MCF 10A (cell line): ENCODE measurements at regions of chr5 and their contacts with region 1.

Region 1: DNA sequence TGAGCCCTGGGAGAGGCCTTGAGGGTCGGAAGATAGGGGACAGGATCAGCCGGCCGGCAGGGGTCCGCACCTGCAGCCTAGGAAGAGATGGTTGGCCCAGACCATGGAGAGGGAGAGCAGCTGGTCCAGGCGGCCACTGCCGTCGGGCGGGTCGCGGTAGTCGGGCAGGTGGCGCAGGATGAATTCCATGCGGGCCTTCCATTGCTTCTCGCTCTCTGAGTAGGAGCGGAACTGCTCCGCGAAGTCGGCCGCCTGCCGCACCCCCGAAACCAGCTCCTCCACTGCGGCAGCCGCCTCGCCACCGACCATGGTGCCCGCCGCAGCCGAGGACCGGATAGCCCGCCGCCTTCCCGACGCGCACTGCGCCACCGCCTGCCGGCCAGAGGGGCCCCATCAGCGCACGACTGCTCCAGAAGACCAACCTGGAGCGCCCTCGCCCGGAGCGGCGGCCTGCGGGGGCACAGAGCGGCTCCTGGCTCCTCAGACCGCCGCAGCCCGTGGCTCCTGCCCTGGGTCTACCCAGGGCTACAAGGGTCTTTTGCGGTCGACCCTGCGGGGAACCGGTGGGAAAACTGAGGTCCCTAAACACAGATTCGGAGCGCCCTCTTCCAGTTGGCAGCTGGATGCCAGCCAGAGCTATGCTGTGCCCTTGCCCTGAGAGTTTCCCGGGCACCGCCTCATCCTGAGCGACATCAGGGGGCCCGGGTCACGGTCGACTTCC is at the start of gene CDKN2AIPNL:
- DNase-seq: peak; percentile 93
- H3K4me3 Mint-ChIP-seq: peak within 1 kb of the TSS; percentile 96
- H3K27ac Mint-ChIP-seq: peak within 1 kb of the TSS; percentile 91
- H3K4me1 Mint-ChIP-seq: peaks cover 37% of the 10 kb centered on the region
- H3K27me3 Mint-ChIP-seq: no peaks in the 10 kb centered on the region
- CTCF ChIP-seq: peak; percentile 79
- total RNA-seq, gene CDKN2AIPNL: 75.1 and 82.4 TPM in 2 replicates

Region 2: DNA sequence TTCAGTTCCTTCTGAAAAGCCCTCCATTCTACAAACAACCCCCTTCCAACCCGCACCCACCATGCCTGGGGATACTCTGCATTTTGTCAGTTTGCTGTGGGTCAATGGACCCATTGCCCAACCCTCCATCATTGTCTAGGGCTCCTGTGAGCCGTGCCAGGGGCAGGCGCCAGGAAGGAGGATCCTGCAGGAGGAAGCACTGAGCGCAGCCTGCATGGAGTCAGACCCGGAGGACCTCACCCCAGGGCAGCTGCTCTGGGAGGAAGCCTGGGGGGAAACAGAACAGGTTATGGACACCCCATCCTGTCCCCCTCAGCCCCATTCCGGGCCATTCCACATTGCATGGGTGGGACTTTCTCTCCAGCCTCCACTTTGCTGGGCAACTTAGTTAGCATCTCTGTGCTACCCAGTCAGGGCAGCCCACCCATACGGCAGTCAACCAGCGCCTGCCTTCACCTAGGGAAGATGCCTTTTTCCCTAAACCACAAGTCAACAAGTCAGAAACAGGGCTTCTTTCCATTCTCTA is 358.3 kb before region 1 on chr5:
- CTCF ChIA-PET with region 1: no interaction called
- POLR2A ChIA-PET with region 1: no interaction called
- intact Hi-C with region 1: no loop called
- DNase-seq: no peak
- H3K4me3 Mint-ChIP-seq: no peak overlapping the region
- H3K27ac Mint-ChIP-seq: no peak overlapping the region
- H3K4me1 Mint-ChIP-seq: peaks cover 33% of the 10 kb centered on the region
- H3K27me3 Mint-ChIP-seq: no peaks in the 10 kb centered on the region
- CTCF ChIP-seq: no peak

Region 3: DNA sequence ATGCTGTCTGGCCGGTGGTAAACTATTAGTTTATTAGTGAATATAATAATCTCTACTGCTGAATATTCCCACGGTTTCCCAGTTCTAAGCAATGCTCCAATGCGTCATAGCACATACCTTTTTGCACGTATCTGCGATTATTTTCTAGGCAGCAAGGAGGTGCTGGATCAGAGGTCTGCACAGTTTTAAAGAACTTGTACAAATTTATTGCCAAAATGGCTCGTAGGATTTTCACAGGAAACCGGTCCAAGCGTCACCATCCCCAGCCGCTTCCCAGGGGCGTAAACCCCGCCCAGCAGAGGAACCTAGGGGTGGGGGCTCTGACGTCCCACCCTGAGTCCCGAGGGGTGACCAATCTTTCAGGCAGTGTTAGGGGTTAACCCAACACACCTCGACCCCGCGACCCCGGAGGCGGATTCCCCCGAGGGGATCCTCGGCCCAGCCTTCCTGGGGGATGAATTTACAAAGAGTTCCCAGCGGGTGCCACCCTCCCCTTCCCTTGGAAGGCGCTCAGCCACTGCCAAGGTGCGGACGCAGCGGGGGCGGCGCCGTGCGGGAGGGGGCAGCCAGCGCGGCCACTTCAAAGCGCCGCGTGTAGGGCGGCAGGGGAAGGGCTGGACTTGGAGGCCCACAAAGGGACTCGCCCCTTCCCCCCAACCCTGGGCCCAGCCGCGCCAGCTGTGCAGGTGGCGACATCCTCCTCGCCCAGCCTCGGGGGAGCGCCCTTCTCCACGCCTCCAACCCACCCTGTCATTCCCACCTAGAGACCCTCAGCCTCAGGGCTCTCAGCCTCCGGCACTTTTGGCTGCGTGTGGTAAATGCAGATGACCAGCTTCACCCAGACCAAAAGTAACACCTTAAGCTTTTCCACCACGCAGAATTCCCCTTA is 340.7 kb before region 1 on chr5:
- CTCF ChIA-PET with region 1: no interaction called
- POLR2A ChIA-PET with region 1: no interaction called
- intact Hi-C with region 1: no loop called
- DNase-seq: no peak
- H3K4me3 Mint-ChIP-seq: no peak overlapping the region
- H3K27ac Mint-ChIP-seq: no peak overlapping the region
- H3K4me1 Mint-ChIP-seq: no peaks in the 10 kb centered on the region
- H3K27me3 Mint-ChIP-seq: no peaks in the 10 kb centered on the region
- CTCF ChIP-seq: no peak

Region 4: GRCh38 chr5:134394932-134395331 is 16.8 kb before region 1 on chr5:
- CTCF ChIA-PET with region 1: interaction called, 34 read pairs
- POLR2A ChIA-PET with region 1: interaction called, 147 read pairs
- intact Hi-C with region 1: no loop called
- DNase-seq: no peak
- H3K4me3 Mint-ChIP-seq: no peak overlapping the region
- H3K27ac Mint-ChIP-seq: no peak overlapping the region
- H3K4me1 Mint-ChIP-seq: peaks cover 12% of the 10 kb centered on the region
- H3K27me3 Mint-ChIP-seq: no peaks in the 10 kb centered on the region
- CTCF ChIP-seq: no peak

Region 5: GRCh38 chr5:134436523-134437339 is 25.0 kb after region 1 on chr5:
- CTCF ChIA-PET with region 1: interaction called, 86 read pairs
- POLR2A ChIA-PET with region 1: interaction called, 91 read pairs
- intact Hi-C with region 1: loop called (anchors 1 kb)
- DNase-seq: peak; percentile 96
- H3K4me3 Mint-ChIP-seq: peak overlapping the region; percentile 63
- H3K27ac Mint-ChIP-seq: peak overlapping the region; percentile 98
- H3K4me1 Mint-ChIP-seq: peaks cover 72% of the 10 kb centered on the region
- H3K27me3 Mint-ChIP-seq: no peaks in the 10 kb centered on the region
- CTCF ChIP-seq: no peak

Region 6: DNA sequence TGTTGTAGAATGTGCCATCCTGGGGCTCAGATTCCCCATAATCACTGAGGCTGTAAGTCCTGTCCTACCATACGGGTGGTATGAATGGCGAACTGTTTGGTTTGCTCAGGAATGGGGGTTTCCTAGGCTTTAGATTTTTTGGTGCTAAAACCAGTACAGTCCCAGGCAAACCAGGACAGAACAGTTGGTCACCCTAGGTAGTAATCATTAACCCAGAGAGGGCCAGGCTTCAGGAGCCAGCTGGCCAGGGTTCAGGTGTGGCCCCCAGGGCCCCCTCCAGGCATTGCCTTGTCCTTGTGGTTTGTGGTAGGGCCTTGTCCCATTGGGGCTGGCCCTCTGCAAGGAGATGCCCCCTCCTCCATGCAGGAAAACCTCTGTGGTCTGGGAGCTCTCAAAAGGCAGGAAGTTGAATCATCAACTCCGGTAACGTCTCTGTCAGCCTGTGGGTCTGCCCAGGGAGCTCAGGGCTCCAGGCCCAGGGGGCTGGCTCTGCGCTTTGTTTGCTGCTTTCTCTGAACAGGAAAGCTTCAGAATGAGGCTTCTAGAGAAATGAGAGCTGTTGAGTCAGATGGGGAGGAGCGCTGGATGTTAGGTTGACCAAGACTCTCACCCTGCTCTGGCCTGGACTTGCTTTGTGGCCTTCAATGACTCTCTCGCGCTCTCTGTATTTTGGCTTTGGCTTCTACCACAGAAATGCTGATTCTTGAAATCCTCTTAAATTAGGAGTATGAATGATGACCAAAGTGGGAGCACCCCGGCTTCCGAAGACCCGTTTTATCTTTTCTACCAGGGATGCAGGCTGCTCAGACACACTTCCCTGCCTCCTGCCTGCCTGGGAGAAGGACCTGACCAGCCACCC is 91.6 kb after region 1 on chr5:
- CTCF ChIA-PET with region 1: interaction called, 31 read pairs
- POLR2A ChIA-PET with region 1: interaction called, 19 read pairs
- intact Hi-C with region 1: no loop called
- DNase-seq: peak; percentile 100
- H3K4me3 Mint-ChIP-seq: peak overlapping the region; percentile 10
- H3K27ac Mint-ChIP-seq: peak overlapping the region; percentile 90
- H3K4me1 Mint-ChIP-seq: peaks cover 45% of the 10 kb centered on the region
- H3K27me3 Mint-ChIP-seq: no peaks in the 10 kb centered on the region
- CTCF ChIP-seq: no peak

Region 7: GRCh38 chr5:134527146-134527960 is 115.6 kb after region 1 on chr5:
- CTCF ChIA-PET with region 1: interaction called, 19 read pairs
- POLR2A ChIA-PET with region 1: interaction called, 125 read pairs
- intact Hi-C with region 1: loop called (anchors 1 kb)
- DNase-seq: peak; percentile 93
- H3K4me3 Mint-ChIP-seq: peak overlapping the region; percentile 91
- H3K27ac Mint-ChIP-seq: peak overlapping the region; percentile 49
- H3K4me1 Mint-ChIP-seq: peaks cover 50% of the 10 kb centered on the region
- H3K27me3 Mint-ChIP-seq: no peaks in the 10 kb centered on the region
- CTCF ChIP-seq: peak; percentile 94

Region 8: DNA sequence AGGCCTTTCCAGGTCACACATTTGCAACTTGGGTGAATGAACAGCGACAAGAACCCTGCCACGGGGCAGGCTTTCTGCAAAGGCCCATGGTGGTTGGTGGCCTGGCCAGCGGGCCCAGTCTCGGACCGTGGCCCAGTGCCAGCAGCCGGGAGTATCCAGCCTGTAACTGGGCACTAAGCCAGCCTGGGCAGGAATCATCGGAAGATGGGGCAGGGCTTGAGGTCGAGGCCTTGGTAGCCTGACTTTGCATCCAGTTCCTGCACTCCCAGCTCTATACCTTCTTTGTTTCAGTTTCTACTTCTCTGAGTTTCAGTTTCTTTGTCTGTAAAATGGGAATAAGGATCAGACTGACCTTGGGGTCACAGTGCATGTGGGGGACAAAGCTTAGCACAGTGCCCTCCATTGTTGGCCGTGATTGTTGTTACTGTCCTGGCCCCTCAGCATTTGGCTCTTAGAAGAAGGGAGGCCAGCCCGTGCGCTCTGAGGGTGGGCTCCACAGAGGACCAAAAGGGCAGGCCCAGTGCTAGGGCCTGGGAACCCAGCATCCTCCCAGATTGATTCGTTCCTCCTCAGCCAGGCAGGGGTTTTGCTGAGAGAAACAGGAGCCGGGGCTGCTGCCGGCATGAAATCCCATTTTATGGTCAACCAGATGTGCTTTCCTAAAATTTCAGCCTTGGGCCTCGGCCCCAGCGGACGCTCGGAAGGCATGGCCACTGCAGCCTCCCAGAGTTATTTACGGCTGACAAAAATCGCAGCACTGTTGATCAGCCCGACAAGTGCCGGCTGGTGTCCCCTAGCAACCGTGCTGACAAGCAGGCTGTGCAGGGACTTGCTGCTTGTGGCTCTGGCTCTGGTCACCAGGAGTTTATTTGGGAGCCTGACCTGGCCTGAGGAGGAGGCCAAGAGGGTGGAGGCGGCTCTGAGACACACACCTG is 157.3 kb after region 1 on chr5:
- CTCF ChIA-PET with region 1: interaction called, 4 read pairs
- POLR2A ChIA-PET with region 1: interaction called, 11 read pairs
- intact Hi-C with region 1: no loop called
- DNase-seq: peak; percentile 92
- H3K4me3 Mint-ChIP-seq: no peak overlapping the region
- H3K27ac Mint-ChIP-seq: peak overlapping the region; percentile 47
- H3K4me1 Mint-ChIP-seq: peaks cover 34% of the 10 kb centered on the region
- H3K27me3 Mint-ChIP-seq: no peaks in the 10 kb centered on the region
- CTCF ChIP-seq: no peak

Region 9: GRCh38 chr5:134586866-134587524 is 175.3 kb after region 1 on chr5:
- CTCF ChIA-PET with region 1: interaction called, 14 read pairs
- POLR2A ChIA-PET with region 1: interaction called, 10 read pairs
- intact Hi-C with region 1: no loop called
- DNase-seq: peak; percentile 88
- H3K4me3 Mint-ChIP-seq: no peak overlapping the region
- H3K27ac Mint-ChIP-seq: no peak overlapping the region
- H3K4me1 Mint-ChIP-seq: peaks cover 18% of the 10 kb centered on the region
- H3K27me3 Mint-ChIP-seq: no peaks in the 10 kb centered on the region
- CTCF ChIP-seq: peak; percentile 89